ENCODE measurements at regions of chr1 and their contacts with region 1.

Region 1: GRCh38 chr1:202348509-202349205 is at the start of gene PPP1R12B:
- DNase-seq: peak; percentile 97 to 99
- ATAC-seq: peak; percentile 95 to 99 (median 98)
- H3K4me3 ChIP-seq: peak within 1 kb of the TSS; percentile 76
- H3K27ac ChIP-seq: peak within 1 kb of the TSS; percentile 90
- H3K4me1 ChIP-seq: peaks cover 23% of the 10 kb centered on the region
- H3K27me3 ChIP-seq: no peaks in the 10 kb centered on the region
- CTCF ChIP-seq: no peak
- total RNA-seq, gene PPP1R12B: 86.1 to 189 (median 158) TPM

Region 2: DNA sequence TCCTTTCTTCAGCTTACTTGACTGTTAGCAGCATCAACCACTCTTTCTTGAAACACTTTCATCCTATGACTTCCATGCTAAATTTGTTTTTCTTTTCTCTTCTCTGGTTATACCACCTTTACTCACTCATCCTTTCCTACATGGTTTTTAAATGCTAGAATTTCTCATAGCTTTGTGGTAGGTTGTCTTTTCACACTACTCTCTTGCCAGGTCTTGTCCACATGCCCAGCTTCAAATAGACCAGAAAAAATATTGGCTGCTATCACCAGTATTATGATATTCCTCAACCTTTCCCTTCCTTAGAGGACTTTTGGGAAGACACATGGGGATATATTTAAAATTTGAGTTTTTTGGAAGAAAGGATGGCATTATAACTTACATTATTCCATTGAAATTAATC is 48.6 kb after region 1 on chr1:
- intact Hi-C with region 1: loop called in 1 of 2 experiments (anchors 5 kb)
- DNase-seq: no peak
- ATAC-seq: no peak
- H3K4me3 ChIP-seq: no peak overlapping the region
- H3K27ac ChIP-seq: peak overlapping the region; percentile 71
- H3K4me1 ChIP-seq: peaks cover 33% of the 10 kb centered on the region
- H3K27me3 ChIP-seq: no peaks in the 10 kb centered on the region
- CTCF ChIP-seq: no peak

Region 3: GRCh38 chr1:202452493-202452892 is 103.8 kb after region 1 on chr1:
- intact Hi-C with region 1: loop called in 1 of 2 experiments (anchors 10 kb)
- DNase-seq: no peak
- ATAC-seq: no peak
- H3K4me3 ChIP-seq: no peak overlapping the region
- H3K27ac ChIP-seq: no peak overlapping the region
- H3K4me1 ChIP-seq: peaks cover 6% of the 10 kb centered on the region
- H3K27me3 ChIP-seq: no peaks in the 10 kb centered on the region
- CTCF ChIP-seq: no peak

Region 4: DNA sequence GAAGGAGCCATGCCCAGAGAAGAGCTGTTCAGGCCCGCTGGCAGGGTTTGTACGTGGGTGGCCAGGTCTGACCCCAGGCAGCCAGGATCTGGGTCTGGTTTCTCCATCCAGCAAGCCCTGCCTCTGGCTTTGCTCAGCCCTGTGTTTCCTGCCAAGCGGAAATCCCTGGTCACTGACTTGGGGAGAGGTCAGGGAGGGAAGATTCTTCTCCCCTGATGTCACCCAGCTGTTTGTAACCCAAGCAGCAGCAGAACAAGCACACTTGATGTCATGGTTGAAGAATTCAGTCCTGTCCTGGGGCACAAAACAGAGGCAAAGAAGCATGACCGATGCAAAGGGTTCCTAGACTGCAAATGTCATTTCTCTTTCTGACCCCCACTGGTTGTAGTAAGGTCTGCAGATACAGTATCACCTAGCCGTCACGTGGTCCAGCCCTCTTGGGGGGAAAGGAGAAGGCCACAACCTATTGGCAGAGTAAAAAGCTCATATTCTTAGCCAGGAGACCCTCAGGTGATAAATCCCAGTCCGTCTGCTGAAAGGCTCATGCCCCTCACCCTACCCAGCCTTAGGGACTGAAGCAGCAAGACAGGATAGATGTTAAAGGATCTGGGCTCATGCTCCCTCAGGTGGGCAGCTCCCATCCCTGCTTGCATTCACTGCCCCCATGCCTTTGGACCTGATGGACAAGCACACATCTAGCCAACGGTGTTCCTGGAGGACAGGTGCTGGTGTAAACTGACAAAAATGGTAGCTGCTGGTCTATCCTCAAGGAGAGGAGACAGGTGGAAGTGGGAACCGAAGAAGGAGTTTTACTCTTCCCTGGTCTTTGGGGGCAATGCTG is 240.8 kb after region 1 on chr1:
- intact Hi-C with region 1: loop called in 1 of 2 experiments (anchors 10 kb)
- DNase-seq: peak; percentile 88 to 95
- ATAC-seq: peak; percentile 95 to 97 (median 96)
- H3K4me3 ChIP-seq: no peak overlapping the region
- H3K27ac ChIP-seq: peak overlapping the region; percentile 91
- H3K4me1 ChIP-seq: peaks cover 69% of the 10 kb centered on the region
- H3K27me3 ChIP-seq: no peaks in the 10 kb centered on the region
- CTCF ChIP-seq: no peak